ENCODE measurements at regions of chr3 and their contacts with region 1.

Region 1: GRCh38 chr3:120052225-120052624 is 42.0 kb downstream of the GSK3B start:
- DNase-seq: peak; percentile 22
- CTCF ChIP-seq: no peak

Region 2: GRCh38 chr3:120039642-120040610 is 12.3 kb before region 1 on chr3:
- CTCF ChIA-PET with region 1: interaction called, 17 read pairs
- POLR2A ChIA-PET with region 1: no interaction called
- DNase-seq: no peak
- CTCF ChIP-seq: no peak